ENCODE measurements at regions of chr3 and their contacts with region 1.

Region 1: GRCh38 chr3:196317687-196318467 is at the start of gene DYNLT2B:
- DNase-seq: peak; percentile 80 to 90 (median 86)
- ATAC-seq: peak; percentile 87 to 89
- H3K4me3 Mint-ChIP-seq: peak within 1 kb of the TSS; percentile 89 to 97 (median 93)
- H3K27ac Mint-ChIP-seq: peak within 1 kb of the TSS; percentile 87 to 98 (median 98)
- H3K4me1 Mint-ChIP-seq: peaks cover 2 to 15% (median 9%) of the 10 kb centered on the region in 4 donors
- H3K27me3 Mint-ChIP-seq: no peaks in the 10 kb centered on the region
- polyA plus RNA-seq, gene DYNLT2B: 9.2 to 12.6 (median 10.0) TPM

Region 2: DNA sequence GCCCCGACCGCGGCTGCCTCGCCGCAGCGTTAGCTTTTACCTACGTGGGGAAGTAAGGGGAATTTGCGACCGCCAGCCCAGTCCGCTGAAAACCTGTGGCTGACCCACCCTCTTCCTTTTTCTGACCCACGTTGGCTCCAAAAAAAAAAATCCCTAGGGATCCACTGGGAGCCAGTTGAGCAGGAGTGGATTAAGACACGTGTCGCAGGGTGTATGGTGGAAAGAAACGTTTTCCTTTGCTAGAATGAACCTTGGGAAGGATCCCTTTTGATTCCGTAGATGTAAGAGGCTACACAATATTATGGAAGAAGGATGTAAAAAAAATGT is 29.8 kb before region 1 on chr3:
- POLR2A ChIA-PET with region 1: interaction called, 11 read pairs
- DNase-seq: no peak
- ATAC-seq: no peak
- H3K4me3 Mint-ChIP-seq: peak overlapping the region; percentile 98 to 100 (median 100)
- H3K27ac Mint-ChIP-seq: peak overlapping the region in 9 of 10 donors; percentile 73 to 100 (median 97)
- H3K4me1 Mint-ChIP-seq: peaks cover 28 to 50% (median 43%) of the 10 kb centered on the region in 4 donors
- H3K27me3 Mint-ChIP-seq: no peaks in the 10 kb centered on the region

Region 3: GRCh38 chr3:196528639-196529233 is 210.9 kb after region 1 on chr3:
- POLR2A ChIA-PET with region 1: no interaction called
- DNase-seq: peak; percentile 22 to 77 (median 67)
- ATAC-seq: peak; percentile 97 to 98
- H3K4me3 Mint-ChIP-seq: peak overlapping the region in 9 of 10 donors; percentile 44 to 71 (median 66)
- H3K27ac Mint-ChIP-seq: peak overlapping the region in 3 of 10 donors; percentile 19 to 66 (median 47)
- H3K4me1 Mint-ChIP-seq: peaks cover 0 to 2% (median 1%) of the 10 kb centered on the region in 4 donors
- H3K27me3 Mint-ChIP-seq: peaks cover 0 to 29% (median 11%) of the 10 kb centered on the region in 5 donors

Measured in naive thymus-derived CD8-positive, alpha-beta T cell (primary cell).